ENCODE measurements at regions of chr2 and their contacts with region 1.

Region 1: GRCh38 chr2:88919087-88919738 is 227.7 kb downstream of the RPIA start:
- DNase-seq: peak; percentile 10 to 58
- ATAC-seq: peak; percentile 76 to 83; a peak in 4 of 6 replicates
- H3K4me3 ChIP-seq: no peak overlapping the region
- H3K27ac ChIP-seq: no peak overlapping the region
- H3K4me1 ChIP-seq: no peaks in the 10 kb centered on the region
- CTCF ChIP-seq: peak; percentile 74
- EP300 ChIP-seq: no peak
- POLR2A ChIP-seq: no peak
- RAD21 ChIP-seq: peak; percentile 38 to 43; a peak in 4 of 5 replicates

Region 2: GRCh38 chr2:88614497-88615157 is 304.6 kb before region 1 on chr2:
- CTCF ChIA-PET with region 1: no interaction called
- POLR2A ChIA-PET with region 1: no interaction called
- DNase-seq: no peak
- ATAC-seq: no peak
- H3K4me3 ChIP-seq: no peak overlapping the region
- H3K27ac ChIP-seq: no peak overlapping the region; a peak in 1 of 6 replicates
- H3K4me1 ChIP-seq: peaks cover 7% of the 10 kb centered on the region; the same call in 1 of the 3 replicates
- CTCF ChIP-seq: no peak
- EP300 ChIP-seq: no peak
- POLR2A ChIP-seq: no peak
- RAD21 ChIP-seq: no peak

Region 3: GRCh38 chr2:88903749-88904353 is 15.4 kb before region 1 on chr2:
- CTCF ChIA-PET with region 1: interaction called, 11 read pairs
- POLR2A ChIA-PET with region 1: no interaction called
- DNase-seq: peak; percentile 13 to 55
- ATAC-seq: peak; percentile 92 to 93
- H3K4me3 ChIP-seq: no peak overlapping the region
- H3K27ac ChIP-seq: no peak overlapping the region
- H3K4me1 ChIP-seq: no peaks in the 10 kb centered on the region
- CTCF ChIP-seq: peak; percentile 73
- EP300 ChIP-seq: no peak
- POLR2A ChIP-seq: no peak
- RAD21 ChIP-seq: peak; percentile 73 to 89